HEK293T (cell line): ENCODE measurements at regions of chr10 and their contacts with region 1.

Region 1: GRCh38 chr10:52644373-52645186 is 128.0 kb downstream of the MBL2 start:
- DNase-seq: peak; percentile 62

Region 2: GRCh38 chr10:52729271-52730104 is 84.9 kb after region 1 on chr10:
- CTCF ChIA-PET with region 1: interaction called, 30 read pairs
- POLR2A ChIA-PET with region 1: no interaction called
- DNase-seq: peak; percentile 56